ENCODE measurements at regions of chr16 and their contacts with region 1.

Region 1: DNA sequence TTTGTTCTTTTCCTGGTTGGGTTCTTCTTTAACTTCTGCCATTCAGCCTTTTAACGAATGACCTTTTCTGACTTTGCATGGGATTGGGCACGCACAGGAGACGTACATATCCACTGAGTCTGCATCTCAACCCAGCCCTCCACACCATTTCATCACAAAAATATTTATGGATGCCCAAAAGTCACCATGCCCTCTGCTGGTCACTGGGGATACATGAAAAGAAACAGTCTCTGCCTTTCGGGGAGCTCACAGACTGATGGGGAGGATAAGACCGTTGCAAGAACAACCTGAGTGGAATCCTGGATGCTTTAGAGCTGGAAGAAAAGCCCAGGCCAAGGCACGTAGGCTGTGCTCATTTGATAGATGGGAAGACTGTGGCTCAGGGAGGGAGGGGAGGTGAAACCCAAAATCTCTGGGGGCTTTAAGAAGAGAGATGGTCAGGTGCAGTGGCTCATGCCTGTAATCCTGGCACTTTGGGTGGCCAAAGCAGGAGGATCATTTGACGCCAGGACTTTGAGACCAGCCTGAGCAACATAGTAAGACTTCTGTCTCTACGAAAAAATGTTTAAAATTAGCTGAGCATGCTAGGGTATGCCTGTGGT is 7.9 kb upstream of the MT2A start:
- DNase-seq: peak in 4 of 10 donors; percentile 45 to 69 (median 58)
- H3K4me3 ChIP-seq: peak overlapping the region in 16 of 59 donors; percentile 4 to 45 (median 22)
- H3K27ac ChIP-seq: peak overlapping the region in 43 of 59 donors; percentile 6 to 84 (median 54)
- H3K27me3 ChIP-seq: no peaks in the 10 kb centered on the region
- CTCF ChIP-seq: peak; percentile 55 to 86 (median 76)

Region 2: GRCh38 chr16:56513972-56514371 is 86.5 kb before region 1 on chr16:
- intact Hi-C with region 1: loop called (anchors 2 kb)
- DNase-seq: peak in 5 of 10 donors; percentile 51 to 71 (median 59)
- H3K4me3 ChIP-seq: peak overlapping the region in 42 of 59 donors; percentile 5 to 100 (median 91)
- H3K27ac ChIP-seq: peak overlapping the region in 56 of 59 donors; percentile 20 to 100 (median 99)
- H3K27me3 ChIP-seq: no peaks in the 10 kb centered on the region
- CTCF ChIP-seq: peak; percentile 54 to 93 (median 78)

Region 3: DNA sequence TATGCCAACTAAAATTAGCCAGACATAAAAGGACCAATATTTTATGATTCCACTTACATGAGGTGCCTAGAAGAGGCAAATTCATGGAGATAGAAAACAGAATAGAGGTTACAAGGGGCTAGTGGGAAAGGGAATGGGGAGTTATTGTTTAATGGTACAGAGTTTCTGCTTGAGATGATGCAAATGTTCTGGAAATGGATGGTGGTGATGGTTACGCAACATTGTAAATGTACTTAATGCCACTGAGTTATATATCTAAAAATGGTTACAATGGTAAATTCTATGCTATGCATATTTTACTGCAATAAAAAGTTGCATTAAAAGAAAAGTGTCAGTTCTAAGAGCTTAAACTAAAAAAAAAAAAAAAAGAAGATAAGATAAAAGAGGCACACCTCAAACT is 99.7 kb after region 1 on chr16:
- intact Hi-C with region 1: loop called (anchors 1 to 5 kb)
- DNase-seq: no peak
- H3K4me3 ChIP-seq: no peak overlapping the region
- H3K27ac ChIP-seq: no peak overlapping the region
- H3K27me3 ChIP-seq: no peaks in the 10 kb centered on the region
- CTCF ChIP-seq: no peak

Measured in dorsolateral prefrontal cortex (tissue), 120 donors.